ENCODE measurements at regions of chr12 and their contacts with region 1.

Region 1: GRCh38 chr12:94596596-94596995 is 53.8 kb downstream of the TMCC3 start:
- DNase-seq: no peak
- H3K4me3 ChIP-seq: no peak overlapping the region
- H3K27ac ChIP-seq: no peak overlapping the region
- H3K4me1 ChIP-seq: peaks cover 51% of the 10 kb centered on the region
- H3K27me3 ChIP-seq: no peaks in the 10 kb centered on the region
- CTCF ChIP-seq: no peak

Region 2: GRCh38 chr12:94560431-94561221 is 36.0 kb before region 1 on chr12:
- CTCF ChIA-PET with region 1: no interaction called
- dilution Hi-C with region 1: no loop called
- in situ Hi-C with region 1: no loop called
- intact Hi-C with region 1: loop called (anchors 5 kb)
- DNase-seq: peak; percentile 98
- H3K4me3 ChIP-seq: peak overlapping the region in 2 of 3 experiments; percentile 20 to 35
- H3K27ac ChIP-seq: peak overlapping the region; percentile 95
- H3K4me1 ChIP-seq: peaks cover 34% of the 10 kb centered on the region
- H3K27me3 ChIP-seq: no peaks in the 10 kb centered on the region
- CTCF ChIP-seq: no peak

Region 3: GRCh38 chr12:94649349-94650142 is 53.0 kb after region 1 on chr12:
- CTCF ChIA-PET with region 1: no interaction called
- dilution Hi-C with region 1: loop called (anchors 5 kb)
- in situ Hi-C with region 1: no loop called
- intact Hi-C with region 1: no loop called
- DNase-seq: peak; percentile 51
- H3K4me3 ChIP-seq: peak overlapping the region; percentile 73 to 92 (median 82)
- H3K27ac ChIP-seq: peak overlapping the region; percentile 63
- H3K4me1 ChIP-seq: peaks cover 27% of the 10 kb centered on the region
- H3K27me3 ChIP-seq: no peaks in the 10 kb centered on the region
- CTCF ChIP-seq: peak; percentile 19 to 53

Region 4: GRCh38 chr12:94875525-94875924 is 278.9 kb after region 1 on chr12:
- CTCF ChIA-PET with region 1: interaction called, 11 read pairs
- dilution Hi-C with region 1: no loop called
- in situ Hi-C with region 1: no loop called
- intact Hi-C with region 1: no loop called
- DNase-seq: peak; percentile 47
- H3K4me3 ChIP-seq: no peak overlapping the region
- H3K27ac ChIP-seq: no peak overlapping the region
- H3K4me1 ChIP-seq: peaks cover 14% of the 10 kb centered on the region
- H3K27me3 ChIP-seq: peaks cover 24% of the 10 kb centered on the region
- CTCF ChIP-seq: peak in 1 of 2 donors; percentile 37

Region 5: DNA sequence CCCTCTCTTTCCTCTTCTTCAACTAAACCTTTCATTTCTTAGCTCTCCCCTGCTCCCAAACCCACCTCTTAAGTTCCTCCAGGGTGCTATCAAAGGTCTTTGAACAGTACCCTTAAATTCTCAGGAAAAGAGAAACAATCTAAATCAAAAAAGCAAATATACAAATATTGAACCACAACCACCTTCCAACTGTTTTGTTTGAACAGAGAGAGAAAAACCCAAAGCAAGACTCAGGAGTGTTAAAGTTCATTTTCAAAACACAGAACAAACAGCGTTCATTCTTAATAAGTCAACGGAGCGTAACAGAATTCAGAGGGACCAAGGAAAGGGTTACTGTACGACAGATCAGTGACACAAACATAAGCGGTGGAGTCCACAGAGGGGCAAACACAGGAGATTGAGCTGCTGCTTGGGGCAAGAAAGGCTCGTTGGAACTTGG is 333.6 kb after region 1 on chr12:
- CTCF ChIA-PET with region 1: no interaction called
- dilution Hi-C with region 1: no loop called
- in situ Hi-C with region 1: no loop called
- intact Hi-C with region 1: no loop called
- DNase-seq: no peak
- H3K4me3 ChIP-seq: no peak overlapping the region
- H3K27ac ChIP-seq: no peak overlapping the region
- H3K4me1 ChIP-seq: no peaks in the 10 kb centered on the region
- H3K27me3 ChIP-seq: no peaks in the 10 kb centered on the region
- CTCF ChIP-seq: no peak